K562 (cell line): ENCODE measurements at regions of chr15 and their contacts with region 1.

Region 1: GRCh38 chr15:44215594-44215993 is 20.5 kb upstream of the FRMD5 start:
- DNase-seq: no peak
- ATAC-seq: no peak
- H3K4me3 ChIP-seq: no peak overlapping the region
- H3K27ac ChIP-seq: no peak overlapping the region
- H3K4me1 ChIP-seq: no peaks in the 10 kb centered on the region; a peak in 1 of 5 replicates
- H3K27me3 ChIP-seq: peaks cover 17 to 19% of the 10 kb centered on the region in 2 experiments
- CTCF ChIP-seq: no peak
- EP300 ChIP-seq: no peak
- POLR2A ChIP-seq: no peak
- RAD21 ChIP-seq: no peak

Region 2: DNA sequence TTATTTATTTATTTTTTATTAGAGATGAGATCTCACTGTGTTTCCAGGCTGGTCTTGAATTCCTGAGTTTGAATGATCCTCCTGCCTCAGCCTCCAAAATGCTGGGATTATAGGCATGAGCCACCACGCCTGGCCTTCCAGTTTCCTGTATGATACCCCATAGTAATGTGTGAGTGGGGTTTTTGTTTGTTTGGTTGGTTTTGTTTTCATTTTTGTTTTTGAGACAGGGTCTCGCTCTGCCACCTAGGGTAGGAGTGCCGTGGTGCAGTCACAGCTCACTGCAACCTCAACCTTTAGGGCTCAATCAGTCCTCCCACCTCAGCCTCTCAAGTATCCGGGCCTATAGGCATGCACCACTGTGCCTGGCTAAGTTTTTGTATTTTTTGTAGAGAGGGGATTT is 103.8 kb after region 1 on chr15:
- CTCF ChIA-PET with region 1: no interaction called
- POLR2A ChIA-PET with region 1: no interaction called
- in situ Hi-C with region 1: no loop called
- intact Hi-C with region 1: loop called (anchors 5 kb)
- DNase-seq: peak in 1 of 4 experiments; percentile 12
- ATAC-seq: peak; percentile 67
- H3K4me3 ChIP-seq: no peak overlapping the region
- H3K27ac ChIP-seq: no peak overlapping the region
- H3K4me1 ChIP-seq: 0 out of 5 replicates have a peak, but pooled peaks cover 0 to 2% of the 10 kb centered on the region in 2 experiments
- H3K27me3 ChIP-seq: no peaks in the 10 kb centered on the region
- CTCF ChIP-seq: peak; percentile 41 to 50 (median 41); a peak in 3 of 6 replicates
- EP300 ChIP-seq: no peak
- POLR2A ChIP-seq: no peak
- RAD21 ChIP-seq: 0 out of 4 replicates have a peak, but pooled peaks of 1 of the 2 experiments have one; percentile 33

Region 3: DNA sequence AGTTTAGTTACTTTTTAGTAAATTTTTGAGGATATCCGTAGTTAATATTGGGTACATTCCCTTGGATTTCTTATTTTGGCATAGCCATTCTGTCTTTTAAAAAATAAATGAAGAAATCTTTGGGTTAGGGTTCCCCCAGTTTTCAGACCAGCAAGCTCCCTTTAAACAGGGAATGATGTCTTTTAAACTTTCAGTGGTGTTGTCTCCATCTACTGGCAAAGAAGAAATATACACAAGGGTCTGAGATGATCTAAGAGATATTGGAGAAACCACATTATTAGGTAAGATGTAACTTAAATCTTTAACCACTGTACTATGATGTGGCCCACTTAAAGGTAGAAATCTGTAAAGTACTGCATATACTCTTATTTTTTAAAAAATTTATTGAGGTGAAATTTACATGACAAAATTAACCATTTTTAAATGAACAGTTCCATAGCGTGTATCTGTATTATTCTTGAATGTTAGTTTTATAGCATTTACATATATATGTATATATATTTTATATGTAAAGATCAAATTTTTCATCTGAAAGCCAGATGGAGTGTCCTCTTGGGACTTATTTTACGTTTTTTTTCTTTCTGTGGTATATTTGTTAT is 286.3 kb after region 1 on chr15:
- CTCF ChIA-PET with region 1: interaction called, 5 read pairs
- POLR2A ChIA-PET with region 1: no interaction called
- in situ Hi-C with region 1: no loop called
- intact Hi-C with region 1: loop called (anchors 10 kb)
- DNase-seq: peak; percentile 30 to 43 (median 37)
- ATAC-seq: peak; percentile 84
- H3K4me3 ChIP-seq: no peak overlapping the region
- H3K27ac ChIP-seq: no peak overlapping the region
- H3K4me1 ChIP-seq: no peaks in the 10 kb centered on the region
- H3K27me3 ChIP-seq: no peaks in the 10 kb centered on the region
- CTCF ChIP-seq: peak; percentile 41 to 66 (median 44); a peak in 4 of 6 replicates
- EP300 ChIP-seq: no peak
- POLR2A ChIP-seq: no peak
- RAD21 ChIP-seq: peak; percentile 51 to 65

Region 4: DNA sequence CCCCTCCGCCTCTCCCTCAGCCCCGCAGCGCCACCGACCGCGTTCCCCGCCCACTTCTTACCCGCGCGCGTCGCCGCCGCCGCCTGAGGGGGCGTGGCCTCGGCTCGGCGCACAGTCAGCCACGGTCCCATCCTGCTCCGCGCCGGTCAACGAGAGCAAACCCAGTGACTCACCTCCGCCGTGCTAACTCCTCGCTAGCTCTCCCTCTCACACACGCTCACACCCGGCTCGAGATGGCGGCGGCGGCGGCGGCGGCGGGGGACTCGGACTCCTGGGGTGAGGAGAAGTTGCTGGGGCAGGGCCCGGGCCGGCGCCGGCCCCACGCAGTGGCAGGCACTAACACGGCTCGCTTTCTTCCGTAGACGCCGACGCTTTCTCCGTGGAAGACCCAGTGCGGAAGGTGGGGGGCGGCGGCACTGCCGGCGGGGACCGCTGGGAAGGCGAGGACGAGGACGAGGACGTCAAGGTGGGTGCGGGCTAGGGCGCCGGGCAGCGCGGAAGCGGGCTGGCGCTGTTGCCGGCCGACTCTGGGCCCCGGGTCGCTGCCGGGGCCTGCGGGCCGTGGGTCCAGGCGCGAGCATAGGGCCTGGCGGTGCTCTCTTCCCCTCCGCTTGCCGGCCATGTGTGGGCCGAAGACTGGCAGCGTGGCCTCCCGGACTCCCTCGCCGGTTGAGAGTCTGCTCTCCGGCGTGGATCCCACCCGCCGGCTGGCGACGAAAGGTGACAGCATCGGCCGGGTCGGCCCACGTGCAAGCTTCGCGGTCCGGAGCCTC is 321.6 kb after region 1 on chr15 and contains the start of gene EIF3J:
- CTCF ChIA-PET with region 1: no interaction called
- POLR2A ChIA-PET with region 1: no interaction called
- in situ Hi-C with region 1: no loop called
- intact Hi-C with region 1: loop called (anchors 10 kb)
- DNase-seq: peak; percentile 91 to 97 (median 94)
- ATAC-seq: peak; percentile 95
- H3K4me3 ChIP-seq: peak within 1 kb of the TSS; percentile 99
- H3K27ac ChIP-seq: peak within 1 kb of the TSS; percentile 99
- H3K4me1 ChIP-seq: peaks cover 15 to 27% of the 10 kb centered on the region in 2 experiments; a peak in 4 of 5 replicates
- H3K27me3 ChIP-seq: no peaks in the 10 kb centered on the region
- CTCF ChIP-seq: no peak
- EP300 ChIP-seq: no peak
- POLR2A ChIP-seq: peak; percentile 97
- RAD21 ChIP-seq: no peak
- polyA plus RNA-seq, gene EIF3J: 44.2 to 48.4 TPM